CD8-positive, alpha-beta T cell (primary cell): ENCODE measurements at regions of chr2 and their contacts with region 1.

Region 1: DNA sequence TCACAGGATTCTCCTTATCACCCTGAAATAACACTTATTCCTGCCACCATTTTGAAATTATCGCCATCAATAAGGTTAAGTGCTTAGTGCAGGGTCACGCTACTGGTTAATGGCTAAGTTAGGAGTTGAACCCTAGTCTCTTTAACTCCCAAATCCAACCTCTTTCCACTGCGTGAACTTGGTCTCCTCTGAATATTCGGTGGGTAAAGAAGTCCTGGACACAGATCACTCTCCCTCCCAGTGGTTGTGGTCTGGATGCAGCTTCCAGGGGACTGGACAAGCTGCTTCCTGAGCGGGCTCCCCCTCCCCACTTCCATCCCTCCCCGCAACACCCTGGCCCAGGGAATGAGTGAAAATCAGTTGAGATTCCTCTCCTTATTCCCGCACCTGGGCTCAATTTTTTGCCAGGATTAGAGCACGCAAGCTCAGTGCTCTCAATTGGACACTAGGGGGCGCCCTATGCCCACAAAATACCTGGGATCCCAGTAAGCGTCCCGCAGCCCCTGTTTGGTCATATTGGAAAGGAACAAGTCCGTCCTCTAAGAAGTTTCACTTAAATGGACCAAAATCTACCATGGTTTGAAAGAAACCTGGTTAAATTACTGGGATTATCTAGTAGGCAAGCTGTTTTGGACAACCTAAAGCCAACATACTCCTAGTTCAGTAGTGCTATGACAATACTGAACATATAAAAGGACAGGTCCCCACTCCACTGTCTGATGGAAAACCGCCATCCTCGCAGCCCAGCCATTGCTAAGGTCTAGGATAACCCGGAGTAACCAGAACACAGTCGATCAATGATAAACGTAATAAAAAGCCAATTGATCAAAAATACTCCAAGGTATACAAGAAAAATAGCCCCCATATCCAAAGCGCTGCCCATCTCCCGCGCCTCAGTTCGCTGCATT is 40.4 kb downstream of the DHRS9 start:
- DNase-seq: peak; percentile 43 to 85 (median 74)
- ATAC-seq: peak; percentile 22
- H3K4me3 ChIP-seq: no peak overlapping the region
- H3K4me3 Mint-ChIP-seq: no peak overlapping the region
- H3K27ac ChIP-seq: no peak overlapping the region
- H3K27ac Mint-ChIP-seq: no peak overlapping the region
- H3K4me1 ChIP-seq: peaks cover 52% of the 10 kb centered on the region
- H3K4me1 Mint-ChIP-seq: peaks cover 51% of the 10 kb centered on the region
- H3K27me3 ChIP-seq: no peaks in the 10 kb centered on the region
- H3K27me3 Mint-ChIP-seq: peaks cover 3% of the 10 kb centered on the region
- CTCF ChIP-seq: peak; percentile 92

Region 2: DNA sequence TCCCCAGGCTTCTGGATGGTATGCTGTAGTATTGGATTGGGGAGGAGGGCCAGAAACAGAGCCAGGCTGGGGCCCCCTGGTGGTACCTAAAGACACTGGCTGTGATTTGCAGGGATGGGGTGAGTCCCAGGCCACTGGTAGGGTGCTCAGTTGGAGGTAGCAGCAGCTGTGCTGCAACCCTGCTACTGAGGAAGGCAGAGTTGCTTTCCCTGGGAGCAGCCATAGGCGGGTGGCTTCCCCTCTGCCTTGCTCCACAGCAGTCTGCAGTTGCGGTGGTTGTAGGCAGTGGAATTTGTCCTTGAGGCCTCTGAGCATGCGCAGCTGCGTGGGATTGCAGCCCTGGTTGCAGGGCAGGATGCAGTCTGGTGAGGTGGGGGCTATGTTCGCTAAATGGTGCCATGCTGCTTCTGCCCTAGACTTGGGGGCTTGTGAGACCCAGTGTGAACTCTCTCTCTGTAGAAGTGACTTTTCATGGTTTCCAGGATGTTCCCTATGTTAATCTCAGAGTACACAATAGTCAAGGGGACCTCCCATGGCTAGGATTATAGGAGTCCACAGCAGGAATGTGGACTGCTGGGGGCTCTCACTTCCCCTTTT is 1778.0 kb before region 1 on chr2:
- CTCF ChIA-PET with region 1: no interaction called
- POLR2A ChIA-PET with region 1: no interaction called
- intact Hi-C with region 1: no loop called
- DNase-seq: no peak
- ATAC-seq: no peak
- H3K4me3 ChIP-seq: no peak overlapping the region
- H3K4me3 Mint-ChIP-seq: no peak overlapping the region
- H3K27ac ChIP-seq: no peak overlapping the region
- H3K27ac Mint-ChIP-seq: no peak overlapping the region
- H3K4me1 ChIP-seq: no peaks in the 10 kb centered on the region
- H3K4me1 Mint-ChIP-seq: no peaks in the 10 kb centered on the region
- H3K27me3 ChIP-seq: no peaks in the 10 kb centered on the region
- H3K27me3 Mint-ChIP-seq: peaks cover 4% of the 10 kb centered on the region
- CTCF ChIP-seq: no peak

Region 3: GRCh38 chr2:168961450-168962229 is 148.1 kb before region 1 on chr2:
- CTCF ChIA-PET with region 1: interaction called, 40 read pairs
- POLR2A ChIA-PET with region 1: interaction called, 3 read pairs
- intact Hi-C with region 1: loop called in 1 of 2 experiments (anchors 1 kb)
- DNase-seq: peak in 7 of 9 experiments; percentile 3 to 79 (median 28)
- ATAC-seq: peak; percentile 88
- H3K4me3 ChIP-seq: no peak overlapping the region
- H3K4me3 Mint-ChIP-seq: no peak overlapping the region
- H3K27ac ChIP-seq: no peak overlapping the region
- H3K27ac Mint-ChIP-seq: no peak overlapping the region
- H3K4me1 ChIP-seq: peaks cover 15% of the 10 kb centered on the region
- H3K4me1 Mint-ChIP-seq: peaks cover 34% of the 10 kb centered on the region
- H3K27me3 ChIP-seq: no peaks in the 10 kb centered on the region
- H3K27me3 Mint-ChIP-seq: no peaks in the 10 kb centered on the region
- CTCF ChIP-seq: peak; percentile 91

Region 4: DNA sequence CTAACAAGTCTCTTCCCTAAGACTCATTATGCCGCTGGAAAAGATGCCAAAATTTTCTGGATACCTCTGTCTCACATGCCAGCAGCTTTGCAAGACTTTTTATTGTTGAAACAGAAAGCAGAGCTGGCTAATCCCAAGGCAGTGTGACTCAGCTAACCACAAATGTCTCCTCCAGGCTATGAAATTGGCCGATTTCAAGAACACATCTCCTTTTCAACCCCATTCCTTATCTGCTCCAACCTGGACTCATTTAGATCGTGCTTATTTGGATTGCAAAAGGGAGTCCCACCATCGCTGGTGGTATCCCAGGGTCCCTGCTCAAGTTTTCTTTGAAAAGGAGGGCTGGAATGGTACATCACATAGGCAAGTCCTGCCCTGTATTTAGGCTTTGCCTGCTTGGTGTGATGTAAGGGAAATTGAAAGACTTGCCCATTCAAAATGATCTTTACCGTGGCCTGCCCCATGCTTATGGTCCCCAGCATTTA is 14.1 kb before region 1 on chr2:
- CTCF ChIA-PET with region 1: interaction called, 16 read pairs
- POLR2A ChIA-PET with region 1: interaction called, 9 read pairs
- intact Hi-C with region 1: no loop called
- DNase-seq: no peak
- ATAC-seq: no peak
- H3K4me3 ChIP-seq: no peak overlapping the region
- H3K4me3 Mint-ChIP-seq: no peak overlapping the region
- H3K27ac ChIP-seq: no peak overlapping the region
- H3K27ac Mint-ChIP-seq: no peak overlapping the region
- H3K4me1 ChIP-seq: no peaks in the 10 kb centered on the region
- H3K4me1 Mint-ChIP-seq: peaks cover 10% of the 10 kb centered on the region
- H3K27me3 ChIP-seq: no peaks in the 10 kb centered on the region
- H3K27me3 Mint-ChIP-seq: peaks cover 2% of the 10 kb centered on the region
- CTCF ChIP-seq: no peak

Region 5: GRCh38 chr2:169141713-169142352 is 32.1 kb after region 1 on chr2:
- CTCF ChIA-PET with region 1: interaction called, 263 read pairs
- POLR2A ChIA-PET with region 1: interaction called, 5 read pairs
- intact Hi-C with region 1: loop called (anchors 1 kb)
- DNase-seq: peak; percentile 11 to 75 (median 66)
- ATAC-seq: peak; percentile 55
- H3K4me3 ChIP-seq: no peak overlapping the region
- H3K4me3 Mint-ChIP-seq: no peak overlapping the region
- H3K27ac ChIP-seq: no peak overlapping the region
- H3K27ac Mint-ChIP-seq: no peak overlapping the region
- H3K4me1 ChIP-seq: no peaks in the 10 kb centered on the region
- H3K4me1 Mint-ChIP-seq: no peaks in the 10 kb centered on the region
- H3K27me3 ChIP-seq: no peaks in the 10 kb centered on the region
- H3K27me3 Mint-ChIP-seq: no peaks in the 10 kb centered on the region
- CTCF ChIP-seq: peak; percentile 90

Region 6: DNA sequence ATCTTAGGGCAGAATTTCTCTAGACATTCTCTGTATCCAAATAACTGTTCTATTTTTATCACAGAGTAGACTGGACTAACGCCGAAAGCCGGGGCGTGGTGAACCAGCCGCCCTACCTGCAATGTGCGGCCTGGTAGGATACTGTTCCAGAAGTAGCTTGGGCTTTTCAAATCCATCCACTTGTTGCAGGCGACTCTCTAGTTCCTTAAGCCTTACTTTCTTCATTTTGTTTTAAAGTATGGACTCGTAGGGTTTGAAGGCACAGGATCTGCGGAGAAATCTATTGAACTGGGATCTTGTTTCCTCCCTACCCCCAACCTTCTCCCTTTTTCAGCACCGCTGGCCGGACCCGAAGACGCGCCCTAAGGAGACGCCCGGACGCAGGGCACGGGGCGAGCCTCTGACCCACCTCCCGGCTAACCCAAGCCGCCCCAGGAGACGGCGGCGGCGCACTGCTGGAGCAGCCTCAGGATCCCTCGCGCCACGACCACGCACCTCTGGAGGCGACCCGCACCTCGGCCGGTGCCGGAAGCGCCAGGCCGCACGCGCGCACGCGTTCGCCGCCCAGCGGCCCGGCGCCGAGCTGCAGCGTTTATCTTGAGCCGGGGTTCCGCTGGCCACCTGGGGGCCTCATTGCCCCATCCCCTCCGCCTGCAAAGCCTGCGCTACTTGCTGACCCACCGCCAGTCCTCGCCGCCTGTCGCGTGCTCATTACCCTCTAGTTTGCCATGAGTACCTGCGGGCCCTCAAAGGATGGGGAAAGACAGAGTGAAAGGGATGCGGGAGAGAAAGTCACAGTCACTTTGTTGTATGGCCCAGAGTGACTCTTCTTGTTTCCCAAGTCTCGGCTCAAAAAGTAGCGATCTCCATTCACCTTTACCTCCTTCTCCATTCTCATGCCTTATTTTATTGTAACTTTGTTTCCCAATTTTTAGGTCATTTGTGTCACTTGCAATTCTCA is 714.9 kb after region 1 on chr2 and contains the start of gene METTL5:
- CTCF ChIA-PET with region 1: no interaction called
- POLR2A ChIA-PET with region 1: no interaction called
- intact Hi-C with region 1: loop called (anchors 5 to 10 kb)
- DNase-seq: peak; percentile 55 to 87 (median 73)
- ATAC-seq: peak; percentile 61
- H3K4me3 ChIP-seq: peak within 1 kb of the TSS; percentile 87
- H3K4me3 Mint-ChIP-seq: peak within 1 kb of the TSS; percentile 95
- H3K27ac ChIP-seq: peak within 1 kb of the TSS; percentile 59 to 72
- H3K27ac Mint-ChIP-seq: peak within 1 kb of the TSS; percentile 92
- H3K4me1 ChIP-seq: peaks cover 37% of the 10 kb centered on the region
- H3K4me1 Mint-ChIP-seq: peaks cover 61% of the 10 kb centered on the region
- H3K27me3 ChIP-seq: no peaks in the 10 kb centered on the region
- H3K27me3 Mint-ChIP-seq: no peaks in the 10 kb centered on the region
- CTCF ChIP-seq: peak; percentile 93
- total RNA-seq, gene METTL5: 13.7 to 15.8 TPM